ENCODE measurements at regions of chr2 and their contacts with region 1.

Region 1: DNA sequence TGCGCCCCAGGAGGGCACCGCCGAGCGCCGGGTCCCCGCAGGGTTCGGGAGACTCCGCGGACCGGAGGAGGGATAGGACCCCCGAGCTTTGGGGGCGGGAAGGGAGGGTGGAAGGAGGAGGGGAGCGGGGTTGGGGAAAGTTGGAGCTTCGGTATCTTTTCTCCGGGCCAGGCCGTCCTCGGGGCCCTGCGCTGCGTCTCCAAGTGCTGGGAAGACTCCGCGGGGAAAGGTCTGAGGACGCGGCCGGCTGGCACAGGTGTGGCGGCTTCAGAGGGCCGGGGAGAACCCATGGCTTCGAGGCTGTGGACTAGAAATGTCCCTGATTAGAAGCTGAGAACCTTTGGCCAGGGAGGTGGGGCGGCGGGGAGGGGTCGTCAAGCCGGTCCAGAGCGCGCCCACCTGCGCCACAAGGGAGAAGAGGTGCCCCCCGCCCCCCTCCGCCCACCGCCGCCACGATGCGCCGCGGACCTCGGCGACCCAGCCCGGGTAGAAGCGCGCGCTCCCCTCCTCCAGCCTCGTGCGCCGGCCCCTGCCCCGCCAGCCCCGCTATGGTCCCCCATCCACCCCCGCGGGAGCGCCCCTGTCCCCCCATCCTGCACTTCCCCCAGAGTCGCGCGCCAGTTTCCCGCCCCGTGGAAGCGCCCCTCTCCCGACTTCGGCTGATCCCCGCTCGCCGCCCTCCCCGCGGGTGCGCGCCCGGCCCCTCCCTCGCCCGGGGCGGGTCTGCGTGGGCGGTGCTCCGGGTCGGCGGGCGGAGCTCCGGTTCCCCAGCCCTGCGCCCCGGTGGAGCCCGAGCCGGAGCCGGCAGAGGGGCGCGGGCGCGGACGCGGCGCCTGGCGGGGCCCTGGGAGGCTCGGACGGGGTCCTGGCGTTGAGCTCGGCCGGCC is at the start of gene SNTG2:
- DNase-seq: no peak
- ATAC-seq: no peak
- H3K4me3 ChIP-seq: peak within 1 kb of the TSS; percentile 4 to 30; a peak in 2 of 4 replicates
- H3K27ac ChIP-seq: no peak within 1 kb of the TSS
- H3K4me1 ChIP-seq: peaks cover 3% of the 10 kb centered on the region; the same call in 1 of the 2 replicates
- H3K27me3 ChIP-seq: no peaks in the 10 kb centered on the region
- CTCF ChIP-seq: no peak
- total RNA-seq, gene SNTG2: not detected

Region 2: DNA sequence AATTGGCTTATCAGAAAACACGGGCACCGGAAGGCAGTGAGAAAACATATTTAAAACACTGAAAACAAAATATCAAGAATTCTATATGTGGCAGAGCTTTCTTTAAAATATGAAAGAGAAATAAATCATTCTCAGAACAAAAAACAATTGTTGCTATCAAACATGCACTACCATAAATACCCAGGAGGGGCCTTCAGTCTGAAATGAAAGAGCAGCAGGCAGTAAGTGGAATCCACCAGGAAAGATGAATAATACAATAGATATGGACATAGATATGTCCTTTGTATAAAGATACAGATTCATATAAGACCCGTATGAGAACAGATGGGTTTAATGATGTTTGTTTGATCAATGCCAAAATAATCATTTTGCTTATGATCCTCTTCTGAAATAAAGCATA is 415.1 kb before region 1 on chr2:
- CTCF ChIA-PET with region 1: no interaction called
- POLR2A ChIA-PET with region 1: no interaction called
- in situ Hi-C with region 1: no loop called
- intact Hi-C with region 1: no loop called
- DNase-seq: no peak
- ATAC-seq: no peak
- H3K4me3 ChIP-seq: no peak overlapping the region
- H3K27ac ChIP-seq: no peak overlapping the region
- H3K4me1 ChIP-seq: no peaks in the 10 kb centered on the region
- H3K27me3 ChIP-seq: no peaks in the 10 kb centered on the region
- CTCF ChIP-seq: no peak; the same call in 1 of the 2 replicates

Region 3: DNA sequence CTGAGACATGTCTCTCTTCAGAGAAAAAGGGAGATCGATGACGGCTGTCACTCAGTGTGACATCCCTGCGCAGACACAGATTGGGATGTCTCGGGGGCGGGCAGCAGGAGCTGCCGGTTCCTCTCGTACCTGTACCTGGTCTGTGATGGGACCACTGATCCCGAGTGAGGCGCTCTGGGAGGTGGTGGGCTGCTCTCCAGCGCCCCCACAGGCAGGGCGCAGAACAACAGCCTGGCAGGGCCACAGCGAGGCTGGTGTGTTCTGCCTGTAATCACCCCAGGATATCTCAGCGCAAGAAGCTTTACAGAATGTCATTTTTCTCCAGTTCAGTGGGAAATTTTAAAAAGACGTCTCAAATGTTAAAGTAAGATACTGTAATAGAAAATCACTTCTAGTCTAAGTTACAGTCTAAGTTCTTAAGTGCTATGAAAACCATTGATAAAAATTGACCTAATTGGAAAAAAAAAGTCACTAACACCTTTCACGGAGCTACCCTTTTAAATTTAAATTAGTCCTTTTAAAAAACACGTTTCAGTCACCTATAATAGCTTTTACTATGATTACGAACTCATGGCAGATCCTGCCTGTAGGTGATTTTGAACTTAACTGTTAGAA is 190.2 kb after region 1 on chr2:
- CTCF ChIA-PET with region 1: interaction called, 3 read pairs
- POLR2A ChIA-PET with region 1: no interaction called
- in situ Hi-C with region 1: no loop called
- intact Hi-C with region 1: loop called (anchors 5 kb)
- DNase-seq: peak; percentile 24
- ATAC-seq: peak; percentile 92
- H3K4me3 ChIP-seq: peak overlapping the region in 1 of 2 experiments; percentile 32; a peak in 1 of 4 replicates
- H3K27ac ChIP-seq: no peak overlapping the region
- H3K4me1 ChIP-seq: no peaks in the 10 kb centered on the region
- H3K27me3 ChIP-seq: no peaks in the 10 kb centered on the region
- CTCF ChIP-seq: peak; percentile 99